ENCODE measurements at regions of chr7 and their contacts with region 1.

Region 1: GRCh38 chr7:146090023-146090645 is 26.5 kb upstream of the CNTNAP2 start:
- DNase-seq: peak; percentile 8
- ATAC-seq: peak; percentile 68
- H3K4me3 ChIP-seq: no peak overlapping the region
- H3K27ac ChIP-seq: no peak overlapping the region
- H3K4me1 ChIP-seq: no peaks in the 10 kb centered on the region
- H3K27me3 ChIP-seq: no peaks in the 10 kb centered on the region
- CTCF ChIP-seq: peak; percentile 57
- EP300 ChIP-seq: no peak
- POLR2A ChIP-seq: no peak
- RAD21 ChIP-seq: no peak

Region 2: DNA sequence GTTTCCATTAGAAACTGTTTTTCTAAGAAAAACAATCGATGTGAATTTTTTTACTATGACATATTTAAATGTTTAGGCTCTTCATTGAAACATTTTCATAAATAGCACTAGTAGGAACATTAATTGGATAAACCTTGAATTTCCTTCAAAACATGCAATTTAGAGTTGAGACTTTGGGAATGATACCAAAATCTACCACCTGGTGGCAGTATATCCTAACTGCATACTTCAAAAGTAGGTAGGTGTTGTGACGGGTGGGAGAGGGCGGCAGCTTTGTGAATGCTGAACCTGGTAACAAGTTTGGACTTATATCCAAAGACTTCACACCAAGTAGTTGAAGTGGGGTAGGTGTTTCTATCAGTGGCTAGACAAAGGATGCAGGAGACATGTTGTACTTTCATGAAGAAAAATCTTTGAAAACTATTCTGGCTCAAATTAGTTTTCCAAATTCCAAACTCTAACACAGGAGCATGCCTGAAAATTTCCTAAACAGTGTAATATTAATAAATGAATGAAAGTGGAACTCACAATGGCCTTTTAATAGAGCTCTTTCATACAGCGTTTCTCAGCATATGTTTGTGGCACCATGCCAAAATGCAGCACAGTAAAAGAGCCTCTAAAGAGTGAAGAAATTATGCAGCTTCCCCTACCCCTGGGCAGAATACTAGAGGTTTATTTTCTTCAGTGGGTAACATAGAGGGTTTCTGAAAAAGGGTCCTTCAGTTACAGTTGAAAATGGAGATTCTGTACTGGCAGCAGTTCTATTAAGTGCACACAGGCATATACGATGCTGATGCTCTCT is 1053.3 kb before region 1 on chr7:
- CTCF ChIA-PET with region 1: interaction called, 9 read pairs
- POLR2A ChIA-PET with region 1: no interaction called
- in situ Hi-C with region 1: loop called (anchors 10 kb)
- intact Hi-C with region 1: loop called (anchors 1 kb)
- DNase-seq: peak; percentile 28
- ATAC-seq: peak; percentile 74
- H3K4me3 ChIP-seq: no peak overlapping the region
- H3K27ac ChIP-seq: no peak overlapping the region
- H3K4me1 ChIP-seq: no peaks in the 10 kb centered on the region
- H3K27me3 ChIP-seq: no peaks in the 10 kb centered on the region
- CTCF ChIP-seq: peak; percentile 75
- EP300 ChIP-seq: no peak
- POLR2A ChIP-seq: no peak
- RAD21 ChIP-seq: no peak; the same call in 1 of the 2 replicates

Region 3: DNA sequence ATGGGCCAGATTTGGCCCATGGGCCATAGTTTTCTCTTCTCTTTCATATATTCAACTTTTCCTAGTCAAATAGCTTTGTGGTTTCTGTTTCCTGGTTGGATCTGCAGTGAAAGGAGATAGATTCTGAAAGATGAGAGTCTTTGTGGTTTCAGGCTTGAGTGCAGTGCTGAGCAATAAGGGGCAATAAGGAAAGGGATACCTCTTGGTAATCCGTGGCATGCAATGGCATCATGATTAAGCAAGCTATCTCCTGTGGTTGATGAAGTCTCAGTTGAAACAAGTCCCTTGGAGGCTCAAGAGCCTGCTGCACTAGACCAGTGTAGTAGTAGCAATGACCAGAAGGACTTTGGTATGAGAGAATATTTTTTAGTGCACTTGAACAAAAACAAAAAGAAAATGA is 161.2 kb before region 1 on chr7:
- CTCF ChIA-PET with region 1: no interaction called
- POLR2A ChIA-PET with region 1: no interaction called
- in situ Hi-C with region 1: no loop called
- intact Hi-C with region 1: no loop called
- DNase-seq: no peak
- ATAC-seq: no peak
- H3K4me3 ChIP-seq: no peak overlapping the region
- H3K27ac ChIP-seq: no peak overlapping the region
- H3K4me1 ChIP-seq: no peaks in the 10 kb centered on the region
- H3K27me3 ChIP-seq: no peaks in the 10 kb centered on the region
- CTCF ChIP-seq: no peak
- EP300 ChIP-seq: no peak
- POLR2A ChIP-seq: no peak
- RAD21 ChIP-seq: no peak

Region 4: DNA sequence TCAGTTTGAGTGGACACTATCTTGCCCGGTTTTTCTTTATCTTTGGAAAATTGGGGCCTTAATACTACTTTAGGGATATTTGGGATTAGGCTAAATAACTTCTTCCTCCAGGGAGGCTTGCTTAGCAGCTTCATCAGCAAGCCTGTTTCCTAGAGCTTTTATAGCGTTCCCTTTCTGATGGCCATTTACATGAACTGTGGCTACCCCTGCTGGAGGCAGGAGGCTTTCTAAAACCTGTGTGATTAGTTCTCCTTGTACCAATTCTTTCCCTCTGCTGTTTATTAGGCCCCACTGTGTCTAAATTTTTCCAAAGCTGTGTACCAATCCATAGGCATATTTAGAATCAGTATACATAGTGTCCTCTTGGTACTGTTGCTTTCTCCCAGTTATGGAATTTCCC is 35.2 kb before region 1 on chr7:
- CTCF ChIA-PET with region 1: no interaction called
- POLR2A ChIA-PET with region 1: no interaction called
- in situ Hi-C with region 1: no loop called
- intact Hi-C with region 1: no loop called
- DNase-seq: no peak
- ATAC-seq: no peak
- H3K4me3 ChIP-seq: no peak overlapping the region
- H3K27ac ChIP-seq: no peak overlapping the region
- H3K4me1 ChIP-seq: no peaks in the 10 kb centered on the region
- H3K27me3 ChIP-seq: no peaks in the 10 kb centered on the region
- CTCF ChIP-seq: no peak
- EP300 ChIP-seq: no peak
- POLR2A ChIP-seq: no peak
- RAD21 ChIP-seq: no peak

Region 5: GRCh38 chr7:146129296-146129695 is 39.2 kb after region 1 on chr7:
- CTCF ChIA-PET with region 1: no interaction called
- POLR2A ChIA-PET with region 1: no interaction called
- in situ Hi-C with region 1: no loop called
- intact Hi-C with region 1: no loop called
- DNase-seq: no peak
- ATAC-seq: no peak
- H3K4me3 ChIP-seq: no peak overlapping the region
- H3K27ac ChIP-seq: no peak overlapping the region
- H3K4me1 ChIP-seq: no peaks in the 10 kb centered on the region
- H3K27me3 ChIP-seq: no peaks in the 10 kb centered on the region
- CTCF ChIP-seq: no peak
- EP300 ChIP-seq: no peak
- POLR2A ChIP-seq: no peak
- RAD21 ChIP-seq: no peak

Measured in HepG2 (cell line).